ENCODE measurements at regions of chr2 and their contacts with region 1.

Region 1: DNA sequence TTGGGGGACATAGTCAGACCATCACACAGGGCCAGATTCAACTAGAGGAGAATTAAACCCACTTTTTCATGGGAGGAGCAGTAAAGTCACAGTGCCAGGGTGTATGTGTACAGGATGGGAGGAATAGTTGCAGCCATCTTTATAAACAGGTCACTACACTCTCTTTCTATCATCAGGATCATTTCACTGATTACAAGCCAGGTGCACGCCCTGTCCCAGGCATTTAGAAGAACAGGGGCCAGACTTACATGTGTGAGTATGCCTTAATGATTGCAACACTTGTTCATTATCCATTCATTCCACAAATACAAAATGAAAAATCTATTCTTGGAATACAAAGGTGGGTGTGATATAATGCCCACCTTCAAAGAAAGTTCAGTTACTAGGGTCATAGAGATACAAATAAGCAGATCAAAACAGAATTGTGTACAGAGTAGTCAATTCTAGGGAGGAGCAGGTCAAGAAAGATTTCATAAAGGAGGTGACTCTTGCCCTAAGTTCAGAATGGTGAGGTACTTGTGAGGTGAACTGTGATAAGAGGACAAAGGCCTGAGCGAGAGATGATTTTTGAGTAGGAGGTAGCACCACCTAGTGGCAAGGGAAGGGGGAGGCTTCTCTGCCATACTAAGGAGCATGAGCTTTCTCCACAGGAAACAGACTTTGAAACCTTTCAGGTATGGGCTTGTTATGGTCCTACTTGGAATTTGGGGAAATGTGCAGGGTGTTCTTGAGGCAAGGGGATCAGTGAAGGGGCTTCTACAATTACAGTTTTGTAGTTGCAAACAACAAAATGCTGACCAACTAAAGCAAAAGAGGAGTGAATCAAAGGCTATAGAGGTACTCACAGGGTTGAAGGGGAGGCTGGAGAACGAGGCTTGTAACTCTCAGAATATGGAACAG is 156.3 kb downstream of the SUCLG1 start:
- DNase-seq: no peak
- H3K4me3 ChIP-seq: no peak overlapping the region
- H3K27ac ChIP-seq: no peak overlapping the region
- H3K4me1 ChIP-seq: no peaks in the 10 kb centered on the region
- H3K27me3 ChIP-seq: no peaks in the 10 kb centered on the region
- CTCF ChIP-seq: peak; percentile 44 to 78 (median 53)
- EP300 ChIP-seq: no peak
- POLR2A ChIP-seq: no peak

Region 2: DNA sequence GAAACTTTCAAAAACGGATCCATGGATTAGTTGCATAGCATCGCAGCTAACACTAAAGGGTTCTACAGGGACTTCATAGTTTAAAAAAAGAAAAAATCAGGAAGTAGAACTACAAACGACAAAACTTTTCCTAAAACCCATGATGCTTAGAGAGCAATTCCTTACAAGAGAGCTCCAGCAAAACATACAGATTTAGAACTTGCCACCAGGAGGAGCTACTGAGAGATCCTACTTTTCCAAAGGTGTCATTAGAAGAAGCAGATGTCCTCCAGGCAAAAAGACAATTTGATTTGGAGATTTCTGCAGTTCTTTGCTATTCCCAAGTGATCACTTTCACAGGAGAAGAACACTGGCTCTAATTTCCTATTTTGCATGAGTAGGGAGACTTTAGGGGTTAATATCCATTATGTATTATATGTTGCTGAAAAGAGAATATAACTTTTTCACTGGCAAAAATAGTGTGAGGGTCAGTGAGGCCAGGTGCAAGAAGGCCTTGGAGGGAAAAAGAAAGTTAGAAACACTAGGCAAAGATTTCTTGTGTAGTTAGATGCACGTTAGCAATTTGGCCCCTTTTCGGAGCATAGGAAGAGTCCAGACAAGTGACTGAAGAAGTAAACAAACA is 279.8 kb before region 1 on chr2:
- intact Hi-C with region 1: loop called (anchors 10 kb)
- DNase-seq: no peak
- H3K4me3 ChIP-seq: no peak overlapping the region
- H3K27ac ChIP-seq: no peak overlapping the region
- H3K4me1 ChIP-seq: no peaks in the 10 kb centered on the region
- H3K27me3 ChIP-seq: no peaks in the 10 kb centered on the region
- CTCF ChIP-seq: peak; percentile 41 to 57 (median 47)
- EP300 ChIP-seq: no peak
- POLR2A ChIP-seq: no peak

Region 3: GRCh38 chr2:84212611-84213314 is 90.0 kb before region 1 on chr2:
- intact Hi-C with region 1: no loop called
- DNase-seq: no peak
- H3K4me3 ChIP-seq: no peak overlapping the region
- H3K27ac ChIP-seq: no peak overlapping the region
- H3K4me1 ChIP-seq: no peaks in the 10 kb centered on the region
- H3K27me3 ChIP-seq: no peaks in the 10 kb centered on the region
- CTCF ChIP-seq: no peak
- EP300 ChIP-seq: no peak
- POLR2A ChIP-seq: no peak

Measured in esophagus muscularis mucosa (tissue), 4 donors.